ENCODE measurements at regions of chr5 and their contacts with region 1.

Region 1: DNA sequence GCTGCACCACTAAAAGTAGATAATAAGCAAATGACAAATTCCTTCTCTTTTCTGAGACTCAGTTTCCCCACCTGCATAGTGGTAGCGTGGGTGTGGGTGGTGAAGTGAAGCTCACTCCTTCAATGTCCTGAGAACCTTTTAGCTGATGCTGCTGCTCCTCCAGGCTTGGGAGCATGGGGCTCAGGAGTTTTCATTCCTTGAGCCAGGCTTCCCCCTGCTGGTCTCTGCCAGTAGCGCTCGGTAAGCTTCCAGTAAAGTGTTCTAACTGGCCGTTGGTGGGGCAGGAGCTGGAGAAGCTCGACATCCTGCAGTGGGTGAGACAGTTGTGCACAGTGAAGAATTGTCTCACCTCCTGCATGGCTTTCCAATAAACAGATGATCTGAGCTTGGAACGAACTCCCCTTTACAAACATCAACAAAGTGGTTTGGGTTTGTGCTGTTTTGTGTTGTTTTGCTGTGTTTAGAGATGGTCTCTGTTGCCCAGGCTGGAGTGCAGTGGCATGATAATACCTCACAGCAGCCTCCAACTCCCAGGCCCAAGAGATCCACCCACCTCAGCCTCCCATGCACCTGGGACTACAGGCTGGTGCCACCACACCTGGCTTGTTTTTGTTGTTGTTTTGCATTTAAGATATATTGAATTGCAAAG is 34.6 kb downstream of the SPARC start:
- DNase-seq: no peak
- ATAC-seq: peak; percentile 100
- H3K4me3 ChIP-seq: no peak overlapping the region
- H3K27ac ChIP-seq: no peak overlapping the region
- H3K4me1 ChIP-seq: no peaks in the 10 kb centered on the region
- H3K27me3 ChIP-seq: no peaks in the 10 kb centered on the region; a peak in 1 of 4 replicates
- CTCF ChIP-seq: peak; percentile 96 to 99 (median 97); a peak in 5 of 6 replicates
- EP300 ChIP-seq: no peak
- POLR2A ChIP-seq: no peak
- RAD21 ChIP-seq: peak; percentile 95

Region 2: GRCh38 chr5:151427258-151427657 is 224.9 kb before region 1 on chr5:
- CTCF ChIA-PET with region 1: interaction called, 15 read pairs
- POLR2A ChIA-PET with region 1: no interaction called
- RAD21 ChIA-PET with region 1: no interaction called
- SMC1A ChIA-PET with region 1: interaction called, 4 read pairs
- in situ Hi-C with region 1: no loop called
- intact Hi-C with region 1: no loop called
- DNase-seq: peak; percentile 66
- ATAC-seq: peak; percentile 98
- H3K4me3 ChIP-seq: no peak overlapping the region
- H3K27ac ChIP-seq: no peak overlapping the region
- H3K4me1 ChIP-seq: peaks cover 5% of the 10 kb centered on the region
- H3K27me3 ChIP-seq: no peaks in the 10 kb centered on the region
- CTCF ChIP-seq: peak; percentile 41 to 56 (median 45); a peak in 5 of 6 replicates
- EP300 ChIP-seq: peak in 1 of 2 experiments; percentile 49; a peak in 1 of 4 replicates
- POLR2A ChIP-seq: no peak
- RAD21 ChIP-seq: peak; percentile 44; the same call in 1 of the 2 replicates

Region 3: DNA sequence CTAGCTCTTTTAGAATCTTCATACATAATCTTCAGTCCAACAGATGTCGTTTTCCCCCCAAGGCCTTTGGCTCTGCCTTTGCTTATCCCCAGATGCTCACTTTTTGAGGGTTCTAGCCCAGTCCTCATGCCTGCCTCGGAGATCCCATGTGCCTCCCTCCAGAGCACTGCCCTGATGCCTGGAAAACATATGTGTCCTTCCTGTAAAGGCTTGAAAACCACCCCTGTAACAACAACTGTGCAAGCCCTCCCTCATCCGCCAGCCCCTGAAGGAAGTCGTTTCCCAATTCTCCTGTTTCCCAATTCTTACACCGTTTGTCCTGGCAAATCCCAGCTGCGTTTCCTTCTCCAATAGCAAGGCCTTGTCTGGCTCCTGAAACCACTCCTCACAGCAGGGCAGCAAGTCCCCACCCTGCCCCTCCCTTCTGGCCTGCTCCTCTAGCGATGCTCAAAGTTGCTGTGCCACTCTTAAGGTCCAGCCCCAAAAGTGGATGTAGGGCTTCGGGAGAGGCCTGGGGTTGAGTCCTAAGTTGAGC is 152.6 kb before region 1 on chr5:
- CTCF ChIA-PET with region 1: interaction called, 26 read pairs
- POLR2A ChIA-PET with region 1: no interaction called
- RAD21 ChIA-PET with region 1: interaction called, 14 read pairs
- SMC1A ChIA-PET with region 1: interaction called, 9 read pairs
- in situ Hi-C with region 1: no loop called
- intact Hi-C with region 1: loop called (anchors 2 kb)
- DNase-seq: no peak
- ATAC-seq: no peak
- H3K4me3 ChIP-seq: no peak overlapping the region
- H3K27ac ChIP-seq: no peak overlapping the region
- H3K4me1 ChIP-seq: peaks cover 5% of the 10 kb centered on the region; the same call in 1 of the 2 replicates
- H3K27me3 ChIP-seq: no peaks in the 10 kb centered on the region
- CTCF ChIP-seq: no peak
- EP300 ChIP-seq: no peak
- POLR2A ChIP-seq: no peak
- RAD21 ChIP-seq: no peak

Region 4: DNA sequence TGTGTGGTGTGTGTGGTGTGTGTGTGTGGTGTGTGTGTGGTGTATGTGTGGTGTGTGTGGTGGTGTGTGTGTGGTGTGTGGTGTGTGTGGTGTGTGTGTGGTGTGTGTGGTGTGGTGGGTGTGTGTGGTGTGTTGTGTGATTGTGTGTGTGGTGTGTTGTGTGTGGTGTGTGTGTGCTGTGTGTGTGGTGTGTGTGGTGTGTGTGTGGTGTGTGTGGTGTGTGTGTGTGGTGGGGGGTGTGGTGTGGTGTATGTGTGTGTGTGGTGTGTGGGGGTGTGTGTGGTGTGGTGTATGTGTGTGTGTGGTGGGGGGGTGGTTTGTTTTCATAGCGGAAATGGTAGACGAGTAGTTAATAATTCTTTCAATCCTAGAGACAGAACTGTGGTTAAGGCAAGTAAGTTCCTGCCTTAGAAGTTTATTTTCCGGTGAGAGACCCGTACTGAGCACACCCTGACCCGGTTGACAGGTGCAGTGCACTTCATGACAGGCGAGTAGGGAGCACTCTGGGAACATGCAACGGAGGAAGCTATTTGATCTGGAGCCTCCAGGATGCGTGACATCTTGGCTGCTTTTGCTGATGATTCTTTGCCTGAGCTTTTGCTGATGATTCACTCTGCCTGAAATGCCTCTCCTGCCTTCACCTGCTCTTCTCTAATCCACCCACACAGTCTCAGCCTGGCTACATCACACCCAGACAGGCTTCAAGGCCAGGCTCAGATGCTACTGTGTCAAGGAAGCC is 39.3 kb before region 1 on chr5:
- CTCF ChIA-PET with region 1: interaction called, 14 read pairs
- POLR2A ChIA-PET with region 1: no interaction called
- RAD21 ChIA-PET with region 1: interaction called, 24 read pairs
- SMC1A ChIA-PET with region 1: interaction called, 18 read pairs
- in situ Hi-C with region 1: no loop called
- intact Hi-C with region 1: no loop called
- DNase-seq: peak; percentile 45
- ATAC-seq: peak; percentile 80
- H3K4me3 ChIP-seq: no peak overlapping the region
- H3K27ac ChIP-seq: peak overlapping the region; percentile 56; the same call in 1 of the 2 replicates
- H3K4me1 ChIP-seq: peaks cover 31% of the 10 kb centered on the region
- H3K27me3 ChIP-seq: no peaks in the 10 kb centered on the region; a peak in 1 of 4 replicates
- CTCF ChIP-seq: no peak
- EP300 ChIP-seq: peak in 1 of 2 experiments; percentile 65; a peak in 3 of 4 replicates
- POLR2A ChIP-seq: no peak
- RAD21 ChIP-seq: no peak

Region 5: DNA sequence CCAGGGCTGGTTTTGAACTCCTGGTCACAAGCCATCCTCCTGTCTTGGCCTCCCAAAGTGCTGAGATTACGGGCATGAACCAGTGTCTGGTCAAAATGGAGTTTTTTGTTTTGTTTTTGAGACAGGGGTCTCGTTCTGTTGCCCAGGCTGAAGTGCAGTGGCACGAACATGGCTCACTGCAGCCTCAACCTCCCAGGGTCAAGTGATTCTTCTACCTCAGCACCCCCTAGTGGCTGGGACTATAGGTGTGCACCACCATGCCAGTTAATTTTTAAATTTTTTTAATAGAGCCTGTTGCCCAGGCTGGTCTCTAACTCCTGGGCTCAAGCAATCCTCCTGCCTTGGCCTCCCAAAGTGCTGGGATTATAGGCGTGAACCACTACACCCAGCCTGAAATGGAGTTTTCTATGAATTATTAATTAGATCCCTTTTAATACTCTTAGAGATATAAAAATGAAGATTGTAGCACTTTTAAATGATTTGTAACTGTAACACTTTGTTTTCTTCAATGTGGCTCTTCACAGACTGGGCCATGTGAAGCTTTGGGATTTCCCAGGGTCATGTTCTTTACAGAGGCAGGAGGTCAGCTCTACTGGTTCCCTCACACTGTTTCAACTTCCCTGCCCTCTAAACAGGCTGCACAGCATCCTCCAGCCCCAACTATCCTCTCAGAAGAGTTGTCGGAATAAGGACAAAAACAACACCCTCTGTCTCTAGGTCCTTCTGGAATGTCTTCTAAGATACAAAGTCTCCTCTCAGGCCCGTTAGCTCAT is 67.3 kb after region 1 on chr5:
- CTCF ChIA-PET with region 1: interaction called, 114 read pairs
- POLR2A ChIA-PET with region 1: no interaction called
- RAD21 ChIA-PET with region 1: interaction called, 66 read pairs
- SMC1A ChIA-PET with region 1: interaction called, 256 read pairs
- in situ Hi-C with region 1: no loop called
- intact Hi-C with region 1: no loop called
- DNase-seq: no peak
- ATAC-seq: peak; percentile 45
- H3K4me3 ChIP-seq: no peak overlapping the region
- H3K27ac ChIP-seq: peak overlapping the region; percentile 94
- H3K4me1 ChIP-seq: peaks cover 55% of the 10 kb centered on the region
- H3K27me3 ChIP-seq: no peaks in the 10 kb centered on the region
- CTCF ChIP-seq: peak; percentile 28 to 58 (median 53); a peak in 5 of 6 replicates
- EP300 ChIP-seq: no peak
- POLR2A ChIP-seq: no peak
- RAD21 ChIP-seq: peak; percentile 71